MCF 10A (cell line): ENCODE measurements at regions of chr17 and their contacts with region 1.

Region 1: DNA sequence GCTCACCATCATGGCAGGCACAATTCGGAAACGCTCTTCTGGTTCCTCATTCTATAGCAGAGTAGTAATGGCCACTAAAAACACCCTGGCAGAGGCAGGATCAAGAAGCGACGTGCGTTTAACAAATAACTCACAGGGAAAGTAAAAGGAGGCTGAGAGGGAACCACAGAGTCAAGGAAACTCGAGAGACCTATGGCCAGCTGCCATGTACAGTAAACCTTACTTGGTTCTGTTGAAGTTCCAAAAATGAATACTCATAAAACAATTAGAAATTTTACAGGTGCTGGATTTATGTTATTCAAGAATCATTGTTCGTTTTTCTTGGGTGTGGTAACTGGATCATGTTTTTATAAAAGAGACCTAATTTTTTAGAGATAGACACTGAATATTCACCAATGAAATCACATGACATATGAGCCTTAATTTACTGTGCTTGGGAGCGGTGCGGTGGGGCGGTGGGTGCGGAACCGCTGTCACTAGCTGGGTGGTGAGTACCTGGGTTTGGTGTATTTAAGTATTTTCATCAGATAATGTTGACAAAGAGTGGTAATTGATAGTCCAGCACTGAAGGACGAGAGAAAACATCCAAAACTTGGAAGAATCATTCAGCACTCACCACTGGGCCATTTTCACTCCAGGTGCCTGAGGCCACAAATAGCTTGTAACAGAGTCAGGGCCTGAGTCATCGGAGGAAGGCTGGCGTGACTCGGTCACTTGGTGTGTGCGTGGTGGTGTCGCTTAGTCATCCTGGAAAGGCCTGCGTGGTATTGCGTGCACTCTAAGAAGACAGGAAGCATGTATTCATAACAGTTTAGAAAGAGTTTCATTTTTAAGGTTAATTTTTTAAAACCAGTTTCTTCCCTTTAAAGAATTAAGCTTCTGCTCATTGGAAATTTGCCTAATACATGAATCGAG is 135.4 kb upstream of the CHMP6 start:
- DNase-seq: peak; percentile 97
- H3K4me3 Mint-ChIP-seq: peak overlapping the region; percentile 36
- H3K27ac Mint-ChIP-seq: peak overlapping the region; percentile 91
- H3K4me1 Mint-ChIP-seq: peaks cover 35% of the 10 kb centered on the region
- H3K27me3 Mint-ChIP-seq: no peaks in the 10 kb centered on the region
- CTCF ChIP-seq: no peak

Region 2: DNA sequence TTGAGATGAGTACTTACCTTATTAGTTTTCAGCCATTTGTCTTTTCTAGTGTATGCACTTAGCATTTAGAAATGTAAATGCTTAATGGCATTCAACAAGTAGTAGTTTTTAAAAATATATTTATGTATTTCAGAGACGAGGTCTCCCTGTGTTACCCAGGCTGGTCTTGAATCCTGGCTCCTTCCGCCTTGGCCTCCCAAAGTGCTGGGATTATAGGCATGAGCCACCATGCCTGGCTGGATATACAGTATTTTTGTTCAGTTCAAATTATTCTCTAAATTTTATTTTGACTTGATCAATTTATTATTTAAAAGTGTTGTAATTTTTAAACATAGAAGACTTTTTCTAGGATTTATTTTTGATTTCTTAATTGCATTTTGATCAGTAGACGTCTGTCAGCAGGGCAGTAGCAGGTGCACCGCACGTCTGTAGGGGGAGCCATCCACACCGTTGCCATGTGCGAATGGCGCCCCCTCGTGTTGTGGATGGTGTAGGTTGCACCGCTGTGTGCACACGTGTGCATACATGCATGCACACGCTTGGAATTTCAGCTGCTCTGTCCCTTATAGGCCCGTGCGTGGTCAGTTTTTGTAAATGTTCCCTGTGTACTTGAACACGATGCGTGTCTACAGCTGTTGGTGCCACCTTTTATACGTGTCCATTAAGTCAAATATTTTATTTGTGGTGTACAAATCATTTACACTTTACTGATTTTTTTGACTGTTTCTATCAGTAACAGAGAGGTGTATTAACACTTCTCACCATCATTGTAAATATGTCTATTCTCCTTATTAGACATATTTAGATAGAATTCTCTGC is 280.9 kb before region 1 on chr17:
- CTCF ChIA-PET with region 1: no interaction called
- POLR2A ChIA-PET with region 1: no interaction called
- intact Hi-C with region 1: loop called (anchors 5 kb)
- DNase-seq: peak; percentile 90
- H3K4me3 Mint-ChIP-seq: no peak overlapping the region
- H3K27ac Mint-ChIP-seq: no peak overlapping the region
- H3K4me1 Mint-ChIP-seq: no peaks in the 10 kb centered on the region
- H3K27me3 Mint-ChIP-seq: no peaks in the 10 kb centered on the region
- CTCF ChIP-seq: peak; percentile 100

Region 3: DNA sequence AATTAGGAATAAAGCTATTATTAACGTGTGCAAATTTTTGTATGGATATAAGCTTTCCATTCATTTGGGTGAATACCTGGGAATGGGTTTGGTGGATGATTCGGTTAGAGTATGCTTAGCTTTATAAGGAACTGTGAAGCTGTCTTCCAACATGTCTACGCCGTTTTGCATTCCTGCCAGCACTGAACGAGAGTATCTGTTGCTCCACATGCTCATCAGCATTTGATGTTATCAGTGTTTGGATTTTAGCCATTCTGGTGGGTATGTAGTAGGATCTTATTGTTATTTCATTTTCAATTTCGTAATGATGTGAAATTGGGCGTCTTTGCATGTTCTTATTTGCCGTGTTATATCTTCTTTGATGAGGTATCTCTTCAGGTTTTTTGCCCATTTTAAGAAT is 143.6 kb before region 1 on chr17:
- CTCF ChIA-PET with region 1: no interaction called
- POLR2A ChIA-PET with region 1: no interaction called
- intact Hi-C with region 1: no loop called
- DNase-seq: no peak
- H3K4me3 Mint-ChIP-seq: no peak overlapping the region
- H3K27ac Mint-ChIP-seq: no peak overlapping the region
- H3K4me1 Mint-ChIP-seq: peaks cover 8% of the 10 kb centered on the region
- H3K27me3 Mint-ChIP-seq: no peaks in the 10 kb centered on the region
- CTCF ChIP-seq: no peak

Region 4: GRCh38 chr17:80791758-80792284 is 64.4 kb before region 1 on chr17:
- CTCF ChIA-PET with region 1: no interaction called
- POLR2A ChIA-PET with region 1: interaction called, 4 read pairs
- intact Hi-C with region 1: loop called (anchors 1 kb)
- DNase-seq: peak; percentile 98
- H3K4me3 Mint-ChIP-seq: peak overlapping the region; percentile 60
- H3K27ac Mint-ChIP-seq: peak overlapping the region; percentile 6
- H3K4me1 Mint-ChIP-seq: peaks cover 49% of the 10 kb centered on the region
- H3K27me3 Mint-ChIP-seq: no peaks in the 10 kb centered on the region
- CTCF ChIP-seq: no peak

Region 5: GRCh38 chr17:80892019-80892855 is 36.0 kb after region 1 on chr17:
- CTCF ChIA-PET with region 1: interaction called, 3 read pairs
- POLR2A ChIA-PET with region 1: interaction called, 14 read pairs
- intact Hi-C with region 1: loop called (anchors 5 kb)
- DNase-seq: peak; percentile 98
- H3K4me3 Mint-ChIP-seq: peak overlapping the region; percentile 62
- H3K27ac Mint-ChIP-seq: peak overlapping the region; percentile 92
- H3K4me1 Mint-ChIP-seq: peaks cover 31% of the 10 kb centered on the region
- H3K27me3 Mint-ChIP-seq: no peaks in the 10 kb centered on the region
- CTCF ChIP-seq: peak; percentile 32